ENCODE measurements at regions of chr2 and their contacts with region 1.

Region 1: DNA sequence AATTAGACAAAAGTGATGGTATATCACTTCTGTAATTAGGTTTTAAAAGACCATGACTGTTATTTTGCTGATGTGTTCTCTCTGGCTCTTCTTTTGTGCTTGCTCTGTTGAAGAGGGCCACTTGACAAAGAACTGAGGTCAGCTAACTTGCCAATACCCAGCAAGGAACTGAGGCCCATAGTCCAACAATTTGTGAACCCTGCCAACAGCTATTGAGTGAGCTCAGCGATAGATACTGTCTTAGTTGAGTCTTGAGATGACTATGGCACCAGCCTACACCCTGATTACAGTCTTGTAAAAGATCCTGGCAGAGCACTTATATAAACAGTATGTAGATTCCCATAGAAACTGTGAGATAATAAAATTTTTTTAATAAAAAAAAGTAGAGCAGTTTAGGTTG is 103.0 kb downstream of the BMPR2 start:
- DNase-seq: peak; percentile 1
- ATAC-seq: no peak
- H3K4me3 ChIP-seq: no peak overlapping the region
- H3K27ac ChIP-seq: no peak overlapping the region
- H3K4me1 ChIP-seq: no peaks in the 10 kb centered on the region
- H3K27me3 ChIP-seq: no peaks in the 10 kb centered on the region
- CTCF ChIP-seq: no peak
- POLR2A ChIP-seq: no peak
- RAD21 ChIP-seq: no peak

Region 2: GRCh38 chr2:202442882-202443281 is 36.2 kb before region 1 on chr2:
- CTCF ChIA-PET with region 1: no interaction called
- POLR2A ChIA-PET with region 1: no interaction called
- dilution Hi-C with region 1: no loop called
- in situ Hi-C with region 1: no loop called
- intact Hi-C with region 1: loop called (anchors 5 kb)
- DNase-seq: peak; percentile 52
- ATAC-seq: peak; percentile 40; the same call in 1 of the 2 replicates
- H3K4me3 ChIP-seq: no peak overlapping the region
- H3K27ac ChIP-seq: no peak overlapping the region
- H3K4me1 ChIP-seq: peaks cover 2% of the 10 kb centered on the region; the same call in 1 of the 2 replicates
- H3K27me3 ChIP-seq: no peaks in the 10 kb centered on the region
- CTCF ChIP-seq: no peak
- POLR2A ChIP-seq: no peak
- RAD21 ChIP-seq: no peak

Measured in IMR-90 (cell line).